CD14-positive monocyte (primary cell): ENCODE measurements at regions of chr22 and their contacts with region 1.

Region 1: GRCh38 chr22:28600546-28601143 is 79.0 kb downstream of the TTC28 start:
- DNase-seq: peak; percentile 11 to 46 (median 23)
- H3K4me3 ChIP-seq: no peak overlapping the region
- H3K4me3 Mint-ChIP-seq: no peak overlapping the region
- H3K27ac ChIP-seq: no peak overlapping the region
- H3K27ac Mint-ChIP-seq: no peak overlapping the region
- H3K4me1 ChIP-seq: no peaks in the 10 kb centered on the region
- H3K4me1 Mint-ChIP-seq: no peaks in the 10 kb centered on the region
- H3K27me3 ChIP-seq: no peaks in the 10 kb centered on the region
- H3K27me3 Mint-ChIP-seq: peaks cover 0 to 2% (median 0%) of the 10 kb centered on the region in 3 donors
- CTCF ChIP-seq: peak; percentile 78

Region 2: GRCh38 chr22:28105413-28105812 is 495.2 kb before region 1 on chr22:
- intact Hi-C with region 1: no loop called
- DNase-seq: no peak
- H3K4me3 ChIP-seq: no peak overlapping the region
- H3K4me3 Mint-ChIP-seq: no peak overlapping the region
- H3K27ac ChIP-seq: no peak overlapping the region
- H3K27ac Mint-ChIP-seq: no peak overlapping the region
- H3K4me1 ChIP-seq: peaks cover 0 to 3% of the 10 kb centered on the region in 2 donors
- H3K4me1 Mint-ChIP-seq: peaks cover 10% of the 10 kb centered on the region
- H3K27me3 ChIP-seq: no peaks in the 10 kb centered on the region
- H3K27me3 Mint-ChIP-seq: peaks cover 0 to 2% (median 0%) of the 10 kb centered on the region in 3 donors
- CTCF ChIP-seq: no peak

Region 3: GRCh38 chr22:28358312-28358711 is 242.3 kb before region 1 on chr22:
- intact Hi-C with region 1: no loop called
- DNase-seq: no peak
- H3K4me3 ChIP-seq: no peak overlapping the region
- H3K4me3 Mint-ChIP-seq: no peak overlapping the region
- H3K27ac ChIP-seq: no peak overlapping the region
- H3K27ac Mint-ChIP-seq: no peak overlapping the region
- H3K4me1 ChIP-seq: no peaks in the 10 kb centered on the region
- H3K4me1 Mint-ChIP-seq: peaks cover 12% of the 10 kb centered on the region
- H3K27me3 ChIP-seq: no peaks in the 10 kb centered on the region
- H3K27me3 Mint-ChIP-seq: no peaks in the 10 kb centered on the region
- CTCF ChIP-seq: no peak

Region 4: DNA sequence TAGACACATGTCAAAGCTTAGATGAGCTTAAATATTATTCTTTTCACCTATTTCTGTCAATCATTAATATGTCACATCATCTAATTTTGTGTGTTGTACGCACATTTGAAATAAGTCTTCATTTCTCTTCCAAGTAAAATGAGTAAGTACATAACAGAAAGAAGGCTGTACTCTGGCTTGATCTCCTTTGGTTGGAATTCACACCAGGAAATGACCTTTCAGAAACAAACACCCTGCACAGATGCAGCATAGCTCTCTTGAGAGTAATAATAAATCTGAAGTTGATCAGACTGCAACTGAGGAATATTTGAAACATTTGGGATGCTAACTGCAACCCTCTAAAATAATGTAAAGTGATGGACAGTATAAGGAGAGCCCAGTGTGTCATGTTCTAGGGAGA is 186.6 kb before region 1 on chr22:
- intact Hi-C with region 1: no loop called
- DNase-seq: no peak
- H3K4me3 ChIP-seq: no peak overlapping the region
- H3K4me3 Mint-ChIP-seq: no peak overlapping the region
- H3K27ac ChIP-seq: no peak overlapping the region
- H3K27ac Mint-ChIP-seq: no peak overlapping the region
- H3K4me1 ChIP-seq: no peaks in the 10 kb centered on the region
- H3K4me1 Mint-ChIP-seq: peaks cover 4% of the 10 kb centered on the region
- H3K27me3 ChIP-seq: no peaks in the 10 kb centered on the region
- H3K27me3 Mint-ChIP-seq: no peaks in the 10 kb centered on the region
- CTCF ChIP-seq: no peak

Region 5: GRCh38 chr22:28829358-28830181 is 228.9 kb after region 1 on chr22:
- intact Hi-C with region 1: loop called (anchors 5 kb)
- DNase-seq: peak; percentile 80 to 81 (median 80)
- H3K4me3 ChIP-seq: peak overlapping the region in 2 of 3 experiments; percentile 25 to 66
- H3K4me3 Mint-ChIP-seq: peak overlapping the region; percentile 56 to 83
- H3K27ac ChIP-seq: peak overlapping the region; percentile 36 to 73
- H3K27ac Mint-ChIP-seq: peak overlapping the region; percentile 62 to 89 (median 80)
- H3K4me1 ChIP-seq: peaks cover 21 to 26% of the 10 kb centered on the region in 2 donors
- H3K4me1 Mint-ChIP-seq: peaks cover 45% of the 10 kb centered on the region
- H3K27me3 ChIP-seq: no peaks in the 10 kb centered on the region
- H3K27me3 Mint-ChIP-seq: peaks cover 0 to 3% (median 0%) of the 10 kb centered on the region in 3 donors
- CTCF ChIP-seq: peak; percentile 97

Region 6: DNA sequence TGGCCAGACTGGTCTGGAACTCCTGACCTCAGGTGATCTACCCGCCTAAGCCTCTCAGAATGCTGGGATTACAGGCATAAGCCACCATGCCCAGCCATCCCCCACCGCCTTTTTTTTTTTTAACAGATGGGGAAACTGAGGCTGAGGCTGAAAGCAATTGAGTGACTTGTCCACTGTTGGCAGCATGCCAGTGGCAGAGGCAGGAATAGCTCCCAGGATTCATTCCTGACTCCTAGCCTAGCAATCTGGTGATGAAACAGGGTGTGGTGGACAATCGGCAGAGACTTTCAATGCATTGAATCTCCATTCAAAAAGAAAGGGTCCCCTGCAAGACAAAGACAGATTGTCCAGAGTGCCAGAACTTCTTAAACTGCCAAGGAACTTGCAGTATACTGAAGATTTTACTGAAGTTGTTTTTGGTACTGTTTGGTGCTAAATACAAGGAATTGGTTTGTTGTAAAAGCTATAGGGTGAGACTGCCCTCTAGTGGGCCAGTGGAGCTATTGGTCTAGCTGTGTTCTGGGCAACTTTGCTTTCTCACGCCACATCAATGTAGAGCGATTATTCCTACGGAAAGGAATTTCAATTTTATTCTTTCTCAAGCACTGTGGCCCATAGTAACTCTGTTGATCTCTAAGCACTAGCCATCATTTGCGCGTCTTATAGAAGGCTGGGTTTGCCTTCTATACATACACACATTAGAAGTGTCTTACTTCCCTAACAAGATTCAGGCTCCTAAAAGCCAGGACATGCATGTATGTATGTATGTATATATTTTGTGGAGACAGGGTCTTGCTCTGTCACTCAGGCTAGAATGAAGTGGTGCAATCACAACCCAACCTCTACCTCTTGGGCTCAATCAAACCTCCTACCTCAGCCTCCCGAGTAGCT is 440.0 kb after region 1 on chr22:
- intact Hi-C with region 1: loop called (anchors 2 to 5 kb)
- DNase-seq: peak; percentile 50 to 72 (median 66)
- H3K4me3 ChIP-seq: no peak overlapping the region
- H3K4me3 Mint-ChIP-seq: no peak overlapping the region
- H3K27ac ChIP-seq: no peak overlapping the region
- H3K27ac Mint-ChIP-seq: no peak overlapping the region
- H3K4me1 ChIP-seq: no peaks in the 10 kb centered on the region
- H3K4me1 Mint-ChIP-seq: peaks cover 2% of the 10 kb centered on the region
- H3K27me3 ChIP-seq: no peaks in the 10 kb centered on the region
- H3K27me3 Mint-ChIP-seq: peaks cover 0 to 3% (median 2%) of the 10 kb centered on the region in 3 donors
- CTCF ChIP-seq: peak; percentile 93

Region 7: GRCh38 chr22:29245637-29246385 is 645.2 kb after region 1 on chr22:
- intact Hi-C with region 1: loop called (anchors 2 to 10 kb)
- DNase-seq: peak; percentile 34 to 57 (median 53)
- H3K4me3 ChIP-seq: no peak overlapping the region
- H3K4me3 Mint-ChIP-seq: no peak overlapping the region
- H3K27ac ChIP-seq: no peak overlapping the region
- H3K27ac Mint-ChIP-seq: peak overlapping the region in 1 of 7 donors; percentile 4
- H3K4me1 ChIP-seq: no peaks in the 10 kb centered on the region
- H3K4me1 Mint-ChIP-seq: no peaks in the 10 kb centered on the region
- H3K27me3 ChIP-seq: no peaks in the 10 kb centered on the region
- H3K27me3 Mint-ChIP-seq: peaks cover 0 to 4% (median 0%) of the 10 kb centered on the region in 3 donors
- CTCF ChIP-seq: peak; percentile 96